ENCODE measurements at regions of chr6 and their contacts with region 1.

Region 1: GRCh38 chr6:25369433-25370181 is 90.4 kb downstream of the CARMIL1 start:
- DNase-seq: peak; percentile 27
- H3K4me3 Mint-ChIP-seq: peak overlapping the region; percentile 61
- H3K27ac Mint-ChIP-seq: peak overlapping the region; percentile 59
- H3K4me1 Mint-ChIP-seq: peaks cover 61% of the 10 kb centered on the region
- H3K27me3 Mint-ChIP-seq: no peaks in the 10 kb centered on the region

Region 2: DNA sequence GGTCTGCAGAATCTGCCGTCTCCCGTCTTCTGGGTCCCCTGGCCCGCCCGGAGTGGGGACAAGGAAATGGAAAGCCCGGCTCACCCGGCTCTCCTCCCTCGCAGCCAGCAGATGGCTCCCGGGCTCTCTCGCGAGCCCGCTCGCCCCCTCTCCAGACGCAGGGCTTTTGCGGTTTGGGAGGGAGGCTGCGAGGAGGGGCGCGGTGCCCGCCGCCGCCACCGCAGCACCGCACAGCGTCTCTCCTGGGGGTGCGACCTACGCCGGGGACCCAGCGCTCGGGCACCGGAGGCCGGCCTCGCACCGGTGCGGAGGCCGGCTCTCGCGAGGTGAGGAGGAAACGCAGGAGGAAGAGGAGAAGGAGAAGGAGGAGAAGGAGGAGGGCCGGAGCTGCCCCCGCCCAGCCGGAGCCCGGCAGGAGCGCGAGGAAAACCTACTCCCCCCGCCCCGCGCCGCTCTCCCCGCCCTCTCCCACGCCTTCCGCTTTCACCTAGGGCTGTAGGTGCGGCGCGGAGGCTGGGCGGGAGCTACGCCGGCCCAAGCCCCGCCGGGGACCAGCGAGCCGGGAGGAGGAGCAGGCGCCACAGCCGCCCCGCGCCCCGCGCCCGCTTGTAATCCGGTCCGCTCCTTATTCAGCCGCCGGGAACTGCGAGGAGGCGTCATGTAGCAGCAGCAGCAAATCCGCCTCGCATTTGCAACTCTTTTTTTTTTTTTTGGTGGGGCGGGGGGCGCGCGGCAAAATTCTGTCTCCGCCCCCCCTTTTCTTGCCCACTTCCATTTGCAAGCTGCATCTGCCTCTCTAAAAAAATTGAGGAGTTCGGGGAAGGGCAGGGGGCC is 90.5 kb before region 1 on chr6 and contains the start of gene CARMIL1:
- CTCF ChIA-PET with region 1: interaction called, 3 read pairs
- POLR2A ChIA-PET with region 1: no interaction called
- intact Hi-C with region 1: loop called (anchors 2 kb)
- DNase-seq: peak; percentile 77
- H3K4me3 Mint-ChIP-seq: peak within 1 kb of the TSS; percentile 81
- H3K27ac Mint-ChIP-seq: peak within 1 kb of the TSS; percentile 44
- H3K4me1 Mint-ChIP-seq: peaks cover 28% of the 10 kb centered on the region
- H3K27me3 Mint-ChIP-seq: no peaks in the 10 kb centered on the region
- total RNA-seq, gene CARMIL1: 2.4 to 2.7 TPM

Region 3: GRCh38 chr6:25389471-25389870 is 19.9 kb after region 1 on chr6:
- CTCF ChIA-PET with region 1: interaction called, 3 read pairs
- POLR2A ChIA-PET with region 1: no interaction called
- intact Hi-C with region 1: loop called (anchors 2 kb)
- DNase-seq: peak; percentile 18
- H3K4me3 Mint-ChIP-seq: no peak overlapping the region
- H3K27ac Mint-ChIP-seq: no peak overlapping the region
- H3K4me1 Mint-ChIP-seq: peaks cover 13% of the 10 kb centered on the region
- H3K27me3 Mint-ChIP-seq: no peaks in the 10 kb centered on the region

Region 4: GRCh38 chr6:25404693-25405169 is 35.1 kb after region 1 on chr6:
- CTCF ChIA-PET with region 1: interaction called, 8 read pairs
- POLR2A ChIA-PET with region 1: interaction called, 3 read pairs
- intact Hi-C with region 1: loop called (anchors 1 kb)
- DNase-seq: peak; percentile 71
- H3K4me3 Mint-ChIP-seq: no peak overlapping the region
- H3K27ac Mint-ChIP-seq: no peak overlapping the region
- H3K4me1 Mint-ChIP-seq: peaks cover 10% of the 10 kb centered on the region
- H3K27me3 Mint-ChIP-seq: no peaks in the 10 kb centered on the region

Measured in activated CD4-positive, alpha-beta memory T cell treated with anti-CD3 and anti-CD28 coated beads for 36 hours (primary cell).